BJ (cell line): ENCODE measurements at regions of chr14 and their contacts with region 1.

Region 1: GRCh38 chr14:70821584-70822529 is 12.5 kb upstream of the MAP3K9 start:
- DNase-seq: no peak
- H3K4me3 ChIP-seq: peak overlapping the region; percentile 79
- H3K27me3 ChIP-seq: no peaks in the 10 kb centered on the region
- CTCF ChIP-seq: no peak

Region 2: DNA sequence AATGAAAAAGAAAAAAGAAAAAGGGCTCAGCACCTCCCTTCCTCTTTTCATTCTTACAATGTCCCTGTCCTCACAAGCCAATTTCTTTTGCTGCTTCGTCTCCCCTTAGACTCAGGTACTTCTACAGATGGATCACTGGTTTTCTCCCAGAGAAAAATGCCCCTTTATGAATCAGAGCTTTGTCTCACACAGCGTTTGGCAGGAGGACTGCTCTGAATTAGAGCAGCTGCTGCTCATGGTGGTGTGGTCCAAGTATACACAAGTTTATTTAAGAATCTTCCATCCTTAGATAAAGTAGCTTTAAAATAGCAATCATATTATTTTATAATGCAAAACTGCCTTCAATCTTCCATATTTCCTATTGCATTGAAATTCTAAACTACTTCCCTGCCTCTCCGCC is 713.4 kb before region 1 on chr14:
- CTCF ChIA-PET with region 1: no interaction called
- POLR2A ChIA-PET with region 1: no interaction called
- DNase-seq: no peak
- H3K4me3 ChIP-seq: no peak overlapping the region
- H3K27me3 ChIP-seq: no peaks in the 10 kb centered on the region
- CTCF ChIP-seq: no peak

Region 3: DNA sequence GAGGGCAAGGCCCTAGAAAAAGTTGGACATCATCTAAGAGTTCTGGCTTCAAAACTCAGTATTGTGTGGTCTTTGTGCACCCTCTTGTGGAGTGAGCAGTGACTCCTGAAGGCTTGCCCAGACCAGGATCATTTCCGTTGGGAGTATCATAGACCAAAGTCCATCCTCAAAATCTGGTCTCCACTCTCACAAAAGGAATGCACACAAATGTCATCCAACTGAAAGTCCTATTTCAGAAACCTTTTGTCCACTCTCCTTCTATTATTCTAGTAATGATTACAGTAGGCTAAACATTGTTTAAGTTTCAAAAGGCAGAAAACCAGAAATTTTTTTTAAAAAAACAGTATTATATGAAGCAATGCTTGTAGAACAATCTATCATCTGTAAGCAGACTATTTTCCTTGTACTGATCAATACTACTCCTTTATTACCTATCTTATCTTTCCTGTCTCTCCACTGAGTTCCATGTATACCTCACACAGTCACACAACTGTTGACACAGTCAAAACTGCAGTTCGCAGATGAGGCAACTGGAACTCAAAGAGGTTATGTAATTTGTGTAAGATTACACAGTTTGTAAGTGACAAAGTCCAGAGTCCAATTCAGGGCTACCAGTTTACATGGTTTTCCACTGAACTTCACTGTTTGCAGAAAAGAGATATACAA is 503.8 kb before region 1 on chr14:
- CTCF ChIA-PET with region 1: no interaction called
- POLR2A ChIA-PET with region 1: no interaction called
- DNase-seq: peak; percentile 4
- H3K4me3 ChIP-seq: no peak overlapping the region
- H3K27me3 ChIP-seq: no peaks in the 10 kb centered on the region
- CTCF ChIP-seq: peak; percentile 57

Region 4: DNA sequence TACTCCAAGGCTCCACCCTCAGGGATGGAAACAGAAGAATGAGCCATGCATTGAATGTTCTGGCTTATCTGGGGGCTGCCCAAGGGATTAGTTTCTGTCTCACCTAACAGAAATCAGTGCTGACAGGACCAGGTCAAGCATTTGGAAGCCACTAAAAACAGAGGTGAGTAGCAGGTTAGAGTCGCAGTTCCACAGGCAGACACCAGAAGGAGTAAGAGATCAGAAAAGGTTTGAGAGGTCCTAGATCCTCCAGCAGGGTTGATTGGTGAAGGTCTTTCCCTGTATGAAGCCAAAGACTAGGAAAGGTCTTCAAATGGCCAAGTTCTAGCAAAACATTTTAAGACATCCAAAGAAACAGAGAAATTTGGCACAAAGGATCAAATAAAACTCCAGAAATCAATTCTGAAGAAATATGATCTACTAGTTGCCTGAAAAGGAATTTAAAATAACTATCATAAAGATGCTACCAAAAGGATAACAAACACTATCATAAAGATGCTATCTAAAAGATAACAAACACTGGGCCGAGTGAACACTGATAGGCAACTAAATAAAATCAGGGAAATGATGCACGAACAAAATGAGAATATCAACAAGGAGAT is 199.6 kb before region 1 on chr14:
- CTCF ChIA-PET with region 1: interaction called, 12 read pairs
- POLR2A ChIA-PET with region 1: no interaction called
- DNase-seq: no peak
- H3K4me3 ChIP-seq: no peak overlapping the region
- H3K27me3 ChIP-seq: no peaks in the 10 kb centered on the region
- CTCF ChIP-seq: peak; percentile 86

Region 5: GRCh38 chr14:70871863-70872677 is 50.2 kb after region 1 on chr14:
- CTCF ChIA-PET with region 1: no interaction called
- POLR2A ChIA-PET with region 1: no interaction called
- DNase-seq: no peak
- H3K4me3 ChIP-seq: no peak overlapping the region
- H3K27me3 ChIP-seq: no peaks in the 10 kb centered on the region
- CTCF ChIP-seq: no peak

Region 6: GRCh38 chr14:70907176-70907995 is 85.5 kb after region 1 on chr14 and contains the start of gene PCNX1:
- CTCF ChIA-PET with region 1: interaction called, 37 read pairs
- POLR2A ChIA-PET with region 1: no interaction called
- DNase-seq: no peak
- H3K4me3 ChIP-seq: peak within 1 kb of the TSS; percentile 91
- H3K27me3 ChIP-seq: no peaks in the 10 kb centered on the region
- CTCF ChIP-seq: peak; percentile 57
- polyA plus RNA-seq, gene PCNX1: 33.2 and 47.8 TPM in 2 replicates

Region 7: GRCh38 chr14:70919774-70920173 is 97.9 kb after region 1 on chr14:
- CTCF ChIA-PET with region 1: interaction called, 11 read pairs
- POLR2A ChIA-PET with region 1: no interaction called
- DNase-seq: no peak
- H3K4me3 ChIP-seq: no peak overlapping the region
- H3K27me3 ChIP-seq: no peaks in the 10 kb centered on the region
- CTCF ChIP-seq: no peak

Region 8: GRCh38 chr14:70955543-70956480 is 134.0 kb after region 1 on chr14:
- CTCF ChIA-PET with region 1: interaction called, 26 read pairs
- POLR2A ChIA-PET with region 1: no interaction called
- DNase-seq: no peak
- H3K4me3 ChIP-seq: no peak overlapping the region
- H3K27me3 ChIP-seq: no peaks in the 10 kb centered on the region
- CTCF ChIP-seq: peak; percentile 69

Region 9: GRCh38 chr14:70972107-70972976 is 150.5 kb after region 1 on chr14:
- CTCF ChIA-PET with region 1: interaction called, 54 read pairs
- POLR2A ChIA-PET with region 1: no interaction called
- DNase-seq: peak; percentile 32
- H3K4me3 ChIP-seq: no peak overlapping the region
- H3K27me3 ChIP-seq: no peaks in the 10 kb centered on the region
- CTCF ChIP-seq: peak; percentile 87